ENCODE measurements at regions of chr10 and their contacts with region 1.

Region 1: GRCh38 chr10:110610308-110610774 is 33.8 kb upstream of the RBM20 start:
- DNase-seq: peak; percentile 66
- H3K4me3 Mint-ChIP-seq: no peak overlapping the region
- H3K27ac Mint-ChIP-seq: no peak overlapping the region
- H3K4me1 Mint-ChIP-seq: peaks cover 26% of the 10 kb centered on the region
- H3K27me3 Mint-ChIP-seq: no peaks in the 10 kb centered on the region

Region 2: GRCh38 chr10:110651044-110651958 is 41.0 kb after region 1 on chr10:
- CTCF ChIA-PET with region 1: interaction called, 3 read pairs
- POLR2A ChIA-PET with region 1: no interaction called
- intact Hi-C with region 1: loop called (anchors 5 kb)
- DNase-seq: peak; percentile 43
- H3K4me3 Mint-ChIP-seq: no peak overlapping the region
- H3K27ac Mint-ChIP-seq: no peak overlapping the region
- H3K4me1 Mint-ChIP-seq: peaks cover 3% of the 10 kb centered on the region
- H3K27me3 Mint-ChIP-seq: peaks cover 29% of the 10 kb centered on the region

Region 3: DNA sequence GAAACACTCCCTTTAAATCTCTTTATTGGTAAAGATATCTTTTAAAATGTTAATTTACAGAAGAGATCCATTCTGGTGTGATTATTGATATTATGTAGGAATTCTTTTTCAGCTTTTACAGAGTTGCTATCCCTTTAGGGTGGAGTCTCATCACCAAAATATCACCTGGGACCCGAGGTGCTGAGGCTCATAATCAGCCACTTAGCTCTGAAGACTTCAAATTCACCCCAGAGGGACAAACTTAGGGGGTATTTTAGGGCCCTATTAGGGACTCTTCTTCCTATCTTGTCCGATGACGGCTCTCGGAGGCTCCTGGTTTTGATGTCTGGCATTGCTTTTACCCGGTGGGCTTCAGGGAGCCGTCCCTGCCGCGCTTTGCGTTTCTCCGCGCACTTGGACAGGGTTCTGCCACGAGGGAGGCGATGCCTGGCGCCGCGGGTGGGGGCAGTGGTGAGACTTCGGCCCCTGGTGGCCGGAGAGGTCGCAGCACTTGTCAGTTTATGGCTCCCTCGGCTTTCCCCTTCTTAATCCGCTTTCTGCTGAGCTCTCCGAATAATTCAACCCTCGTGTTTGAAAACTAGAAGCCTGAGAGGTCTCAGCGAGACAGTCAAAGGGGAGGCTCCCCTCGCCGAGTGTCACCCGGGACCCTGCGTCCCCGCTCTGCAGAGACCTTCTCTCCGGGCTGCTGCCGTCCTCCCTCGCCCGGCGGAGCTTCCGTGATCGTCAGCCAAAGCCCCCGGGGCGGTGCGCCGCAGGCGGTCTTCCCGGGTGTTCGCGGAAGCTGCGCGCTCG is 61.6 kb after region 1 on chr10:
- CTCF ChIA-PET with region 1: interaction called, 54 read pairs
- POLR2A ChIA-PET with region 1: no interaction called
- intact Hi-C with region 1: loop called (anchors 1 kb)
- DNase-seq: peak; percentile 81
- H3K4me3 Mint-ChIP-seq: peak overlapping the region; percentile 78
- H3K27ac Mint-ChIP-seq: no peak overlapping the region
- H3K4me1 Mint-ChIP-seq: peaks cover 2% of the 10 kb centered on the region
- H3K27me3 Mint-ChIP-seq: no peaks in the 10 kb centered on the region

Region 4: GRCh38 chr10:110681023-110681681 is 70.8 kb after region 1 on chr10:
- CTCF ChIA-PET with region 1: interaction called, 25 read pairs
- POLR2A ChIA-PET with region 1: no interaction called
- intact Hi-C with region 1: loop called (anchors 2 kb)
- DNase-seq: peak; percentile 47
- H3K4me3 Mint-ChIP-seq: no peak overlapping the region
- H3K27ac Mint-ChIP-seq: no peak overlapping the region
- H3K4me1 Mint-ChIP-seq: no peaks in the 10 kb centered on the region
- H3K27me3 Mint-ChIP-seq: peaks cover 1% of the 10 kb centered on the region

Region 5: GRCh38 chr10:110893559-110894179 is 283.3 kb after region 1 on chr10:
- CTCF ChIA-PET with region 1: interaction called, 5 read pairs
- POLR2A ChIA-PET with region 1: no interaction called
- intact Hi-C with region 1: loop called (anchors 1 kb)
- DNase-seq: no peak
- H3K4me3 Mint-ChIP-seq: no peak overlapping the region
- H3K27ac Mint-ChIP-seq: peak overlapping the region; percentile 4
- H3K4me1 Mint-ChIP-seq: peaks cover 47% of the 10 kb centered on the region
- H3K27me3 Mint-ChIP-seq: no peaks in the 10 kb centered on the region

Region 6: DNA sequence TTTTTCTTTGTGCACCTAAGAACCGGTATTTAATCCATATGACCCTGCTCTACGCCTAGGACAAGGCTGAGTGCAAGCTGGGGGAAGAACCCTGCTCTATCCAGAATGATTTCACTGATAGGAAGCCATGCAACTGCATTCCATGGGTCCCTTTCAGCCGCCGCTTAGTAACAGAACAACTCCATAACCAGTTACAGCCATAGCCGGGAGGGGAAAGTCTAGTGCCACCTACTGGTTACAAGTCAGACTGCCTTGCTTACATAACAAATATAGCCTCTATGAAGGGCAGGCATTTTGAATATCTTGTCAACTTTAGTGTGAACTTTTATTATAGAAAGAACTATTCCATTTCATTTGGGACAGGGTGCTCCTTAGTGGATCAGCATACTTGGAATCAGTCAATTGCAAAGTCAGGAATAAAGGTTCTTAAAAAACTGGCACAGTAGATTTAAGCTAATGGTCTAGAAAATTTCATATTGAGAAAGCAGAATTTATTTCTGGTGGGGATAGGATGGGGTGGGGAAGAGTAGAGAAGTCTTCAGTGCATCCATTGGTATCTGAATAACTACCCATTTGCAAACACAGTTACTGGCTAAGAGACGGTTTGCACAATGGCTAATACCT is 988.2 kb after region 1 on chr10:
- CTCF ChIA-PET with region 1: interaction called, 4 read pairs
- POLR2A ChIA-PET with region 1: no interaction called
- intact Hi-C with region 1: loop called (anchors 10 kb)
- DNase-seq: peak; percentile 54
- H3K4me3 Mint-ChIP-seq: no peak overlapping the region
- H3K27ac Mint-ChIP-seq: no peak overlapping the region
- H3K4me1 Mint-ChIP-seq: no peaks in the 10 kb centered on the region
- H3K27me3 Mint-ChIP-seq: peaks cover under 1% of the 10 kb centered on the region

Region 7: GRCh38 chr10:111648046-111648445 is 1037.7 kb after region 1 on chr10:
- CTCF ChIA-PET with region 1: no interaction called
- POLR2A ChIA-PET with region 1: no interaction called
- intact Hi-C with region 1: no loop called
- DNase-seq: no peak
- H3K4me3 Mint-ChIP-seq: no peak overlapping the region
- H3K27ac Mint-ChIP-seq: no peak overlapping the region
- H3K4me1 Mint-ChIP-seq: no peaks in the 10 kb centered on the region
- H3K27me3 Mint-ChIP-seq: no peaks in the 10 kb centered on the region

Measured in activated CD4-positive, alpha-beta memory T cell treated with anti-CD3 and anti-CD28 coated beads for 36 hours (primary cell).